Colonic mucosa (tissue), 4 donors: ENCODE measurements at regions of chr16 and their contacts with region 1.

Region 1: DNA sequence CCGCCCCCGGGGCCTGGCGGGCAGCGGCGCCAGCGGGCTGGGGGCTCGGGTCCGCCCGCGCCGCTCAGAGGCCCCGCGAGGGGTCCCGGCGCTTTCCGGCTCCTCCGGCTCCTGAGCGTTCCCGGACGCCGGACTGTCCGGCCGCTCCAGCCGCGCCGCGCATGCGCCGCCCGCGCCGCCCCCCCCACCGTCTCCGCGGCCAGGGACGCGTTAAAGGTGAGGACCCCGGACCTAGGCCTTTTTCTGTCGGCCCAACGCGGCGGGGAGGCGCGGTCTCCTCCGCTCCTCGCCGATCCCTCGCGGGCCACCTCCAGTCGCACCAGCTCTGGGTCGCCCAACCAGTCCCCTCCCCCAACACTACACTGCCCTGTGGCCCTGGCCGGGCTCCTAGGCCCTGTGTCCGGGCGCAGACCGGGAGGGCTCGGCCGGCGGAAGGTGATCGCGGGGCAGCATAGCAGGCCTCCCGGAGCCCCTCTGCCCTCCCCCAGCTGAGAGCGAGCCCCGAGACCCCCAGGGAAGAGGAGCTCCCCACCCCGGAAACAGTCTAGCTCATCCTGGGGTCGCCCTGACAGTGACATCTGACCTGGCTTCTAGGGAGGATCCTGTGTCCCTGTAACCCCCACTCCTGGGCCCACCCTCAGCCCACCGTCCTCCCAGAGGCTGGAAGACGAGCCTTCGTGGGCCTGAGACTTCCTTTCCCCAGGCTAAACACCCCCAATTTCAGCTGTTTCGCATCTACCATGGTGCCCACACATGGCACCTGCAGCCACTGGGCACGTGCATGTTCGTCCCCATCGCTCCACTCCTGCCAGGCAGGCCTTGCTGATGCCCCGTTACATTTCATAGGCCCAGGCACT is 14.6 kb upstream of the BCAR1 start:
- DNase-seq: peak; percentile 66
- H3K4me3 ChIP-seq: peak overlapping the region; percentile 92
- H3K27ac ChIP-seq: peak overlapping the region; percentile 84
- H3K4me1 ChIP-seq: peaks cover 29% of the 10 kb centered on the region
- H3K27me3 ChIP-seq: no peaks in the 10 kb centered on the region
- CTCF ChIP-seq: no peak

Region 2: DNA sequence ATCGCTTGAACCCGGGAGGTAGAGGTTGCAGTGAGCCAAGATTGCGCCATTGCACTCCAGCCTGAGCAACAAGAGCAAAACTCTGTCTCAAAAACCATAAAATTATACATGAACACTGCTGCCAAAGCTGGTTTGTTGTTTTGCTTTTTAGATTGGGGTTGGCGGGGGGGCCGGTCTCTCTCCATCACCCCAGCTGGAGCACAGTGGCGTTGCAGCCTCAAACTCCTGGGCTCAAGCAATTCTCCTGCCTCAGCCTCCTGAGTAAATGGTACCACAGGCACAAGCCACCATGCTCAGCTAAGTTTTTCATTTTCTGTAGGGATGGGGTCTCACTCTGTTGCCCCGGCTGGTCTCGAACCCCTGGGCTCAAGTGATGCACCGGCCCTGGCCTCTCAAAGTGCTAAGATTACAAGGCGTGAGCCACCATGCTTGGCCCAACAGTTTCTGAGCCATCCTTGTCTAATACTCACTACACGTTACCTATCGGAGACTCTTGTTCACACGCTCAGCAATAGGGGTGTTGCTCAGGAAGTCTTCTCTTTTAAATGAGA is 292.8 kb before region 1 on chr16:
- intact Hi-C with region 1: no loop called
- DNase-seq: no peak
- H3K4me3 ChIP-seq: no peak overlapping the region
- H3K27ac ChIP-seq: no peak overlapping the region
- H3K4me1 ChIP-seq: no peaks in the 10 kb centered on the region
- H3K27me3 ChIP-seq: no peaks in the 10 kb centered on the region
- CTCF ChIP-seq: no peak

Region 3: DNA sequence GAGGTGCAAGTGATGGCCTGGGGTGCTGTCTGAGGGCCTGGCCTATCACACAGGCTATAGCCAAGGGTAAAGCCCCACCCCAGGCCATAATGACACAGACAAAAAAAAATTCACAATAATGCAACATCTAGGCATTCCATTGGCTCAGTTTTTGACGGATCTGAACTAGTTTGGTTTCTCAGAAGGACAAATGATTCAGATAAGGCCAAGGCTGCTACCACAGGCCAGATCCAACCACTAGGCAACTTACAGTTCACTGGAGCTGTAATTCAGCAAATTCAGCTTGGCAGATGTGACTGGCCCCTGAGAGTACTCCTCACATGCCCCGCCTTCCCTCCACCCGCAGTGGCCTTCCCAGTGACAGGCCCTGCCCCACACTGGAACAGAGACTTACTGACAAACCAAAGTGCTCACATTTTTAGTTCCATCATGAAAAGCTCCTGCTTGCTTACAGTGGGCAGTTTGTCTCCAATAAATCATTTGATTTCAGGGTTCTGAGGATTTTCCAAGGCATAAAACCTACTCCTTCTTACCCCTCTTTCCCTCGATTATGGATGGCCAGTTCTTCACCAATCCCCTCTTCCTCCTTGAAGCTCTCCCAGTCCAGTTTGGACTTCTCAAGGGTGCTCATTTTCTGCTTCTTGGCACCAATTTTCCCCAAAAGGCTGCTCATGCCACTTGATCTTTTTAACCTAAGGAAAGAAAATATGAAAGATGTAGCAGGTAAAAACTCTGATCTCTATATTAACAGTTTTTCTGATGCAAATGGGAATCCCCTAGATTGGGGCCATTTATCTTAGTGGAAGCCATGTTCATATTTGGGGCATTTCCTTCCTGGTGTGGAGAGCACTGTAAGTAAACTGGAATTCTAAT is 38.7 kb after region 1 on chr16:
- intact Hi-C with region 1: loop called (anchors 5 kb)
- DNase-seq: peak; percentile 73
- H3K4me3 ChIP-seq: no peak overlapping the region
- H3K27ac ChIP-seq: peak overlapping the region; percentile 92
- H3K4me1 ChIP-seq: peaks cover 12% of the 10 kb centered on the region
- H3K27me3 ChIP-seq: no peaks in the 10 kb centered on the region
- CTCF ChIP-seq: no peak